ENCODE measurements at regions of chr10 and their contacts with region 1.

Region 1: DNA sequence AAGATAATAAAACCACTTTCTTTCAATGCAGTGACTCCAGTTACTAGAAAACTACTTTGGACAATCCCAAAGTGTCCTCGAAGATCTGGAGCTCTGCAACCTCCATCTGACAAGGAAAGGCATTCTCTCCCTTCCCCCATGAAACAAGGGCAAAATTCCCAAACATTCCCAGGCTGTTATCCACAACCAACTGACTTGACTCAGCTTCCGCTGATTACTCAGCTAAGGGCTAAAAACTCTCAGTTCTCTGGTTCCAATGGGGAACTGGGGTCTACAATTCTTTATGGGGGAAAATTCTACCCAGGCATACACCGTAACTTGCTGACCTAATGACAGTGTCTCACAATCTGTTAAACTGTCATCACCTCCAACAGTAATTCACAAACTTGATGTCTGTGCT is 48.4 kb downstream of the SFMBT2 start:
- DNase-seq: no peak
- ATAC-seq: no peak
- H3K4me3 ChIP-seq: no peak overlapping the region
- H3K27ac ChIP-seq: peak overlapping the region in 1 of 2 experiments; percentile 61; a peak in 2 of 6 replicates
- H3K4me1 ChIP-seq: peaks cover 42% of the 10 kb centered on the region
- CTCF ChIP-seq: no peak
- EP300 ChIP-seq: no peak
- POLR2A ChIP-seq: no peak
- RAD21 ChIP-seq: no peak

Region 2: GRCh38 chr10:7045891-7046599 is 316.4 kb before region 1 on chr10:
- CTCF ChIA-PET with region 1: no interaction called
- POLR2A ChIA-PET with region 1: no interaction called
- DNase-seq: no peak
- ATAC-seq: no peak
- H3K4me3 ChIP-seq: no peak overlapping the region
- H3K27ac ChIP-seq: no peak overlapping the region
- H3K4me1 ChIP-seq: no peaks in the 10 kb centered on the region
- CTCF ChIP-seq: no peak
- EP300 ChIP-seq: no peak
- POLR2A ChIP-seq: no peak
- RAD21 ChIP-seq: no peak

Region 3: GRCh38 chr10:7373039-7373438 is 10.6 kb after region 1 on chr10:
- CTCF ChIA-PET with region 1: interaction called, 28 read pairs
- POLR2A ChIA-PET with region 1: no interaction called
- DNase-seq: no peak
- ATAC-seq: no peak
- H3K4me3 ChIP-seq: no peak overlapping the region
- H3K27ac ChIP-seq: peak overlapping the region in 1 of 2 experiments; percentile 42; a peak in 2 of 6 replicates
- H3K4me1 ChIP-seq: peaks cover 26% of the 10 kb centered on the region
- CTCF ChIP-seq: no peak
- EP300 ChIP-seq: no peak
- POLR2A ChIP-seq: no peak
- RAD21 ChIP-seq: no peak